Activated CD4-positive, alpha-beta T cell treated with anti-CD3 and anti-CD28 coated beads for 36 hours (primary cell): ENCODE measurements at regions of chr4 and their contacts with region 1.

Region 1: GRCh38 chr4:118224239-118224829 is 128.5 kb downstream of the PRSS12 start:
- DNase-seq: no peak
- ATAC-seq: no peak
- H3K4me3 Mint-ChIP-seq: no peak overlapping the region
- H3K27ac Mint-ChIP-seq: no peak overlapping the region
- H3K4me1 Mint-ChIP-seq: no peaks in the 10 kb centered on the region
- H3K27me3 Mint-ChIP-seq: peaks cover 3% of the 10 kb centered on the region

Region 2: GRCh38 chr4:116358588-116359222 is 1865.6 kb before region 1 on chr4:
- CTCF ChIA-PET with region 1: no interaction called
- POLR2A ChIA-PET with region 1: no interaction called
- intact Hi-C with region 1: loop called in 1 of 2 experiments (anchors 5 kb)
- DNase-seq: peak; percentile 64
- ATAC-seq: peak; percentile 69
- H3K4me3 Mint-ChIP-seq: no peak overlapping the region
- H3K27ac Mint-ChIP-seq: no peak overlapping the region
- H3K4me1 Mint-ChIP-seq: no peaks in the 10 kb centered on the region
- H3K27me3 Mint-ChIP-seq: no peaks in the 10 kb centered on the region

Region 3: DNA sequence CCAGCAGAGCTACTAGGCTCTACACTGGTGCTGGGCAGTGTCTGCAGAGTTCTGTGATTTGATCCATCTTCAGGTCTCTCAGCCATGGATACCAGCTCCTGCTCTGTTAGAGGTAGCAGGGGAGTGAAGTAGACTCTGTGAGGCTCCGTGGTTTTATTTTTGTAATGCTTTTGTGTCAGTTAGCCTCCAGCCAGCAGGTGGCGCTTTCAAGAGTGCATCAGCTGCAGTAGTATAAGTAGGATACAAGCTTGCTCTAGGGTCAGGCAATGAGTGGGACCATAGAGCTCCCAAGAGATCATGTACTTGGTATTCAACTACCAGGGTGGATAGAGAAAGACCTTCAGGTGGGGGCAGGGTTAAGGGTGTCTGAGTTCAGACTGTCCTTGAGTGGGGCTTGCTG is 776.4 kb before region 1 on chr4:
- CTCF ChIA-PET with region 1: no interaction called
- POLR2A ChIA-PET with region 1: no interaction called
- intact Hi-C with region 1: loop called in 1 of 2 experiments (anchors 2 kb)
- DNase-seq: peak; percentile 60
- ATAC-seq: peak; percentile 33
- H3K4me3 Mint-ChIP-seq: no peak overlapping the region
- H3K27ac Mint-ChIP-seq: no peak overlapping the region
- H3K4me1 Mint-ChIP-seq: no peaks in the 10 kb centered on the region
- H3K27me3 Mint-ChIP-seq: peaks cover 2% of the 10 kb centered on the region

Region 4: GRCh38 chr4:117817301-117817700 is 407.0 kb before region 1 on chr4:
- CTCF ChIA-PET with region 1: no interaction called
- POLR2A ChIA-PET with region 1: no interaction called
- intact Hi-C with region 1: no loop called
- DNase-seq: no peak
- ATAC-seq: no peak
- H3K4me3 Mint-ChIP-seq: no peak overlapping the region
- H3K27ac Mint-ChIP-seq: no peak overlapping the region
- H3K4me1 Mint-ChIP-seq: no peaks in the 10 kb centered on the region
- H3K27me3 Mint-ChIP-seq: no peaks in the 10 kb centered on the region

Region 5: GRCh38 chr4:118034053-118034785 is 190.1 kb before region 1 on chr4 and contains the start of gene NDST3:
- CTCF ChIA-PET with region 1: interaction called, 3 read pairs
- POLR2A ChIA-PET with region 1: no interaction called
- intact Hi-C with region 1: loop called in 1 of 2 experiments (anchors 5 kb)
- DNase-seq: peak; percentile 54
- ATAC-seq: peak; percentile 53
- H3K4me3 Mint-ChIP-seq: peak within 1 kb of the TSS; percentile 49
- H3K27ac Mint-ChIP-seq: no peak within 1 kb of the TSS
- H3K4me1 Mint-ChIP-seq: peaks cover 7% of the 10 kb centered on the region
- H3K27me3 Mint-ChIP-seq: peaks cover 21% of the 10 kb centered on the region
- total RNA-seq, gene NDST3: not detected

Region 6: DNA sequence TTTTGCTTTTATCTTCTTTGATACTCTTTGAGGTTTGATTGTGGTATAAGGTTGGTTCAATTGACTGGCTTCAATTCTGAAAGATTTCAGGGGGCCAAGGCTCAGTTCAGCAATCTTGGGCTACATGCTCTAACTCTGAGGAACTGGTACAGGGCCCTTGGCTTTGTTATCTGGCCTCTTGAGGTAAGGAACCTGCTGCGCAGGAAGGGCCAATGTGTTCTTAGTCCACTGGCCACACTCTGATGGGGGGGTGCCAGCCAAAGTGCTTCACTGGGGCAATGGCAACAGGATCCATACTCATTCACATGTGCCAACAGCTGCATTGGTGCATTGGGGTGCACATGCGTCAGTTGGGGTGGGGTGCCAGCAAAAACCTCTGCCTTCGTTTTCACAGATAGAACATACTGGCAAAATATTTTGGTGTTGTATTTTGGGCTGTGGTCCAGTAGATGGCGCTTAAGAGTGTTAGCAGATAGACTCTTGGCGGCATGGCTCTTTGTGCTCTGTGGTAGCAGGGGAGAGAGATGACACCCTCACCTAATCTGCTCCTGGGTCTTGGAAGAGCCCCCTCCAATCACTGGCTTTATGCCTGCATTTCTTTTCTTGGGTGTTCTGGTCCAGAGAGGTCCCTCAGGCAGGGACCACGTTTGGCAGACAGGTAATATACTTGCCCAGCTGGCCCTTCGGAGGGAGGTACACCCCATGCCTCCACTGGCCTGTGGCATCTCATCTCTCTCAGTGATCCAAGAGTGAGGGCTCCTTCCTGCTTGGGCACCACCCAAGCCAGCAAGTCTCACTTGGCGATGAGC is 147.2 kb before region 1 on chr4:
- CTCF ChIA-PET with region 1: interaction called, 8 read pairs
- POLR2A ChIA-PET with region 1: no interaction called
- intact Hi-C with region 1: loop called (anchors 1 to 2 kb)
- DNase-seq: peak; percentile 48
- ATAC-seq: peak; percentile 74
- H3K4me3 Mint-ChIP-seq: no peak overlapping the region
- H3K27ac Mint-ChIP-seq: no peak overlapping the region
- H3K4me1 Mint-ChIP-seq: no peaks in the 10 kb centered on the region
- H3K27me3 Mint-ChIP-seq: peaks cover 4% of the 10 kb centered on the region

Region 7: DNA sequence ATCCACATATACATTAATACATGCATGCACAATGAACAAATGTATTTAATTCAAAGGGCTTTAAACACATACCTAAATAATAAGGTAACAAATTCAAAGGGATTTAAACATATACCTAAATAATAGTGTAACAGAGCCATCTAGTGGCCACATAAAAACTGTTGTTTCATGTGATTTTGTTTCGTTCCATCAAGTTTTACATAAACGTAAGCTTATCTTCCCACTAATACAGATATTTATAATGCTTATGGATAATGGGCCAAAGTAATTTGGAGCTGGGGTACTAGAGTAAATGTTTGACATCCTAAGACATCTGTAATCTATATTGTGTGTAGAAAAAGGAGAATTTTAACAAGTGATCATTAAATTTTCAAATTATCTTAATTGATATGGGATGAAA is 46.2 kb after region 1 on chr4:
- CTCF ChIA-PET with region 1: interaction called, 4 read pairs
- POLR2A ChIA-PET with region 1: no interaction called
- intact Hi-C with region 1: loop called in 1 of 2 experiments (anchors 5 kb)
- DNase-seq: no peak
- ATAC-seq: peak; percentile 30
- H3K4me3 Mint-ChIP-seq: no peak overlapping the region
- H3K27ac Mint-ChIP-seq: no peak overlapping the region
- H3K4me1 Mint-ChIP-seq: no peaks in the 10 kb centered on the region
- H3K27me3 Mint-ChIP-seq: peaks cover 2% of the 10 kb centered on the region

Region 8: DNA sequence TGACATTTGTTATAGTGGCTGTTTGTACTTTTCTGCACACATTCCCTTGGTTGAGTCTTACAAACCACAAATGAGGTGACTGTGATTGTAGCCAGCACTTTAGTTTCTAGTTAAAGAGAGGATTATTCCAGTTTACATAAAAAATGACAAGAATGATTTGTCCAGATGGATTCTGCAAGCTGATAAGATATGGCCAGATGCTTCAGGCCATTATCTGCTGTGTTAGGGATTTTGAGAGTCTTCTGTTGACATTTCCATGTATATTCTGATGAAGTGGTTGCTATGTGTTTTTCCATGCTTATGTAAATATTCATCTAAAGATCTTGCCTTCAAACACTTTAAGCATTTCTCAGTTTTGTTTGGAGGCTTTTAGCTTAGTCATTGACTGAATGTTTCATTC is 1435.3 kb after region 1 on chr4:
- CTCF ChIA-PET with region 1: no interaction called
- POLR2A ChIA-PET with region 1: no interaction called
- intact Hi-C with region 1: no loop called
- DNase-seq: no peak
- ATAC-seq: no peak
- H3K4me3 Mint-ChIP-seq: no peak overlapping the region
- H3K27ac Mint-ChIP-seq: no peak overlapping the region
- H3K4me1 Mint-ChIP-seq: no peaks in the 10 kb centered on the region
- H3K27me3 Mint-ChIP-seq: peaks cover 10% of the 10 kb centered on the region